K562 (cell line): ENCODE measurements at regions of chr1 and their contacts with region 1.

Region 1: GRCh38 chr1:11784993-11785769 is 20.6 kb downstream of the MTHFR start:
- DNase-seq: peak; percentile 89 to 94 (median 92)
- ATAC-seq: peak; percentile 78
- H3K4me3 ChIP-seq: no peak overlapping the region
- H3K27ac ChIP-seq: peak overlapping the region; percentile 80; the same call in 2 of the 3 replicates
- H3K4me1 ChIP-seq: peaks cover 45 to 66% of the 10 kb centered on the region in 2 experiments
- H3K27me3 ChIP-seq: no peaks in the 10 kb centered on the region
- CTCF ChIP-seq: peak; percentile 90 to 96 (median 92)
- EP300 ChIP-seq: peak; percentile 47; the same call in 1 of the 2 replicates
- POLR2A ChIP-seq: peak; percentile 66
- RAD21 ChIP-seq: peak; percentile 67 to 83

Region 2: GRCh38 chr1:11507309-11507708 is 277.9 kb before region 1 on chr1:
- CTCF ChIA-PET with region 1: no interaction called
- POLR2A ChIA-PET with region 1: no interaction called
- in situ Hi-C with region 1: no loop called
- intact Hi-C with region 1: no loop called
- DNase-seq: no peak
- ATAC-seq: no peak
- H3K4me3 ChIP-seq: no peak overlapping the region
- H3K27ac ChIP-seq: no peak overlapping the region
- H3K4me1 ChIP-seq: no peaks in the 10 kb centered on the region
- H3K27me3 ChIP-seq: no peaks in the 10 kb centered on the region
- CTCF ChIP-seq: no peak
- EP300 ChIP-seq: no peak
- POLR2A ChIP-seq: no peak
- RAD21 ChIP-seq: no peak

Region 3: DNA sequence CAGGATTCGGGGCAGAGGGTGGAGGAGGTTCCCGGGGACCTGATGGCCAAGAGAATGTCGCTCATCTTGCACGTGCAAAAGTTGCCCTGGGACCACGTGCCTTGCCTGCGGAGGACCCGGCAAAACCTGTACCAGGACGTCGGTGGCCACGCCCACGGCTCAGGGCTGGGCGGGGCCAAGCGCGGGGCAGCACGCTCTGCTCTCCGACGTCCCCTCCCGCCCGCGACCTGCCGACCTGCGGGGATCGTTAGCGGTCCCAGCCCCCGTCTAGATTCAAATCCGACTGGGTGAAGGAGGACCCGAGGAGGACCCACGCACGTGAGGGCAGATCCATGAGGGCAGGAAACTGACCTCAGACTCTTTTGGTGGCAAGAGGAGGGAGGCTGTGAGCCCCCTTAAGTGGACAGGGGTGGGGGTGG is 23.2 kb before region 1 on chr1 and contains the start of gene C1orf167:
- CTCF ChIA-PET with region 1: no interaction called
- POLR2A ChIA-PET with region 1: interaction called, 10 read pairs
- in situ Hi-C with region 1: no loop called
- intact Hi-C with region 1: no loop called
- DNase-seq: peak; percentile 80 to 92 (median 86)
- ATAC-seq: peak; percentile 94
- H3K4me3 ChIP-seq: peak within 1 kb of the TSS; percentile 27; the same call in 1 of the 2 replicates
- H3K27ac ChIP-seq: no peak within 1 kb of the TSS; the same call in 2 of the 3 replicates
- H3K4me1 ChIP-seq: peaks cover 8 to 42% of the 10 kb centered on the region in 2 experiments; a peak in 3 of 5 replicates
- H3K27me3 ChIP-seq: no peaks in the 10 kb centered on the region
- CTCF ChIP-seq: no peak
- EP300 ChIP-seq: no peak
- POLR2A ChIP-seq: no peak
- RAD21 ChIP-seq: no peak
- polyA plus RNA-seq, gene C1orf167: not detected

Region 4: DNA sequence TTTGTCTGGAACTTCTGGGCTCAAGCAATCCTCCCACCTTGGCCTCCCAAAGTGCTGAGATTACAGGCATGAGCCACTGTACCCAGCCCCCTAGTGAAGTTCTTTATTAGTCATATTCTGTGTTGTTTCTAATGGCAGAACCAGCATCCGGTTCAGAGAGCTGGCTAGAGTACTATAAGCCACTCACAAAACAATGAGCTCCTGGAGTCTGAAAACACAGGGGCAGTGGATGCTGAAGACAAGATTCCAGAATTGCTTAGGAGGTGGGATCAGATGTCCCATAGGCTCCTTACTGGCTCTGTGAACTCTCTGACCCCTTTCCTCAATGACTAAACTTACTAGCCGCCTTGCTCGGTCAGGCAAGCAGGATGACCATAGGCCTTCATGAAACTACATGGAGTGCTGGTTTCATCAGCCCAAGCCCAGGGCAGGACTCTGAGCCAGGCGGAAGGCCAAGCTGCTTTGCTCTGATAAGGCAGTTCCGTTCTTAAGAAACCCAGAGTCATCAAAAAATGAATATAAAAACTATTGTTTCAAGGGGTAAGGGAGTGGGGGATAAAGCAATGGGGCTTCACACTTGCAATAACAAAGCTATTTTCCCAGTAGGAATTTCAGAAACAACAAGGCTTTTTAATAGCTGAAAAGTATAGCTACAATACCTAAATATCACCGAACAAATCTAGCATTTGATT is 12.5 kb after region 1 on chr1:
- CTCF ChIA-PET with region 1: no interaction called
- POLR2A ChIA-PET with region 1: interaction called, 115 read pairs
- in situ Hi-C with region 1: no loop called
- intact Hi-C with region 1: no loop called
- DNase-seq: peak; percentile 84 to 98 (median 88)
- ATAC-seq: peak; percentile 76
- H3K4me3 ChIP-seq: peak overlapping the region; percentile 0; the same call in 1 of the 2 replicates
- H3K27ac ChIP-seq: peak overlapping the region; percentile 100
- H3K4me1 ChIP-seq: peaks cover 67 to 71% of the 10 kb centered on the region in 2 experiments
- H3K27me3 ChIP-seq: no peaks in the 10 kb centered on the region
- CTCF ChIP-seq: no peak
- EP300 ChIP-seq: peak; percentile 99
- POLR2A ChIP-seq: no peak; the same call in none of the 2 replicates
- RAD21 ChIP-seq: peak; percentile 4 to 35; a peak in 2 of 4 replicates

Region 5: GRCh38 chr1:11805447-11806306 is 20.5 kb after region 1 on chr1 and contains the starts of genes CLCN6 and MTHFR:
- CTCF ChIA-PET with region 1: no interaction called
- POLR2A ChIA-PET with region 1: interaction called, 75 read pairs
- in situ Hi-C with region 1: no loop called
- intact Hi-C with region 1: loop called (anchors 1 kb)
- DNase-seq: peak; percentile 97 to 100 (median 98)
- ATAC-seq: peak; percentile 84
- H3K4me3 ChIP-seq: peak within 1 kb of the TSS; percentile 81
- H3K27ac ChIP-seq: peak within 1 kb of the TSS; percentile 98
- H3K4me1 ChIP-seq: peaks cover 34 to 40% of the 10 kb centered on the region in 2 experiments
- H3K27me3 ChIP-seq: no peaks in the 10 kb centered on the region
- CTCF ChIP-seq: peak in 1 of 3 experiments; percentile 5; a peak in 1 of 6 replicates
- EP300 ChIP-seq: peak; percentile 79
- POLR2A ChIP-seq: peak; percentile 94
- RAD21 ChIP-seq: peak; percentile 5 to 14; a peak in 2 of 4 replicates
- polyA plus RNA-seq, gene CLCN6: 2.0 to 3.1 TPM
- polyA plus RNA-seq, gene MTHFR: 5.0 to 5.4 TPM

Region 6: GRCh38 chr1:11822096-11822495 is 36.9 kb after region 1 on chr1:
- CTCF ChIA-PET with region 1: no interaction called
- POLR2A ChIA-PET with region 1: no interaction called
- in situ Hi-C with region 1: no loop called
- intact Hi-C with region 1: no loop called
- DNase-seq: no peak
- ATAC-seq: no peak
- H3K4me3 ChIP-seq: no peak overlapping the region
- H3K27ac ChIP-seq: no peak overlapping the region
- H3K4me1 ChIP-seq: no peaks in the 10 kb centered on the region
- H3K27me3 ChIP-seq: no peaks in the 10 kb centered on the region
- CTCF ChIP-seq: no peak
- EP300 ChIP-seq: no peak
- POLR2A ChIP-seq: no peak
- RAD21 ChIP-seq: no peak

Region 7: GRCh38 chr1:11858968-11859871 is 74.0 kb after region 1 on chr1:
- CTCF ChIA-PET with region 1: no interaction called
- POLR2A ChIA-PET with region 1: no interaction called
- in situ Hi-C with region 1: no loop called
- intact Hi-C with region 1: loop called (anchors 2 kb)
- DNase-seq: peak; percentile 89 to 97 (median 94)
- ATAC-seq: peak; percentile 99
- H3K4me3 ChIP-seq: no peak overlapping the region
- H3K27ac ChIP-seq: no peak overlapping the region
- H3K4me1 ChIP-seq: peaks cover 0 to 10% of the 10 kb centered on the region in 2 experiments; a peak in 2 of 5 replicates
- H3K27me3 ChIP-seq: peaks cover 40 to 45% of the 10 kb centered on the region in 2 experiments; a peak in 4 of 5 replicates
- CTCF ChIP-seq: peak; percentile 60 to 79 (median 69)
- EP300 ChIP-seq: no peak
- POLR2A ChIP-seq: no peak
- RAD21 ChIP-seq: peak in 1 of 2 experiments; percentile 46; a peak in 2 of 4 replicates